ENCODE measurements at regions of chr2 and their contacts with region 1.

Region 1: GRCh38 chr2:101831351-101831865 is 133.9 kb downstream of the MAP4K4 start:
- DNase-seq: peak; percentile 60 to 95 (median 80)

Region 2: DNA sequence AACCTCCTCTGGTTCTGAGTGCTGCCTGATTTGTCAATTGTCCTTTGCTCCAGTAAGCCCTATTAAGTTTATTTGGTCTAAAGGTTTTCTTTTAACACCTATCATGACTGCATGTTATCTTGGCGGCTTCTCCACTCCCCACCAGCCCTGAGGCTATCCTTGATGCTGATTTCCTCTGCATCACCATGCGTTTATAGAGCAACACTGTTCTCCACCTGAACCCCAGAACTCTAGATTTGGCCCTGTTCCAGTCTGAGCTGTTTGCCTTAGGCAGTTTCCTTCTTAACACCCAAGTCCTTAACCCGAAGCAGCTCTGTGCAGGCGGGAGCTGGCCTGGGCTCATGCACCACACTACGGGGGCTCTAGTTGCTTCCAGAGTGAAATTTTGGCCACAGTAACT is 1109.7 kb before region 1 on chr2:
- intact Hi-C with region 1: no loop called
- DNase-seq: no peak

Region 3: GRCh38 chr2:101341901-101342624 is 489.3 kb before region 1 on chr2:
- intact Hi-C with region 1: loop called (anchors 10 kb)
- DNase-seq: peak; percentile 61 to 96 (median 84)

Region 4: DNA sequence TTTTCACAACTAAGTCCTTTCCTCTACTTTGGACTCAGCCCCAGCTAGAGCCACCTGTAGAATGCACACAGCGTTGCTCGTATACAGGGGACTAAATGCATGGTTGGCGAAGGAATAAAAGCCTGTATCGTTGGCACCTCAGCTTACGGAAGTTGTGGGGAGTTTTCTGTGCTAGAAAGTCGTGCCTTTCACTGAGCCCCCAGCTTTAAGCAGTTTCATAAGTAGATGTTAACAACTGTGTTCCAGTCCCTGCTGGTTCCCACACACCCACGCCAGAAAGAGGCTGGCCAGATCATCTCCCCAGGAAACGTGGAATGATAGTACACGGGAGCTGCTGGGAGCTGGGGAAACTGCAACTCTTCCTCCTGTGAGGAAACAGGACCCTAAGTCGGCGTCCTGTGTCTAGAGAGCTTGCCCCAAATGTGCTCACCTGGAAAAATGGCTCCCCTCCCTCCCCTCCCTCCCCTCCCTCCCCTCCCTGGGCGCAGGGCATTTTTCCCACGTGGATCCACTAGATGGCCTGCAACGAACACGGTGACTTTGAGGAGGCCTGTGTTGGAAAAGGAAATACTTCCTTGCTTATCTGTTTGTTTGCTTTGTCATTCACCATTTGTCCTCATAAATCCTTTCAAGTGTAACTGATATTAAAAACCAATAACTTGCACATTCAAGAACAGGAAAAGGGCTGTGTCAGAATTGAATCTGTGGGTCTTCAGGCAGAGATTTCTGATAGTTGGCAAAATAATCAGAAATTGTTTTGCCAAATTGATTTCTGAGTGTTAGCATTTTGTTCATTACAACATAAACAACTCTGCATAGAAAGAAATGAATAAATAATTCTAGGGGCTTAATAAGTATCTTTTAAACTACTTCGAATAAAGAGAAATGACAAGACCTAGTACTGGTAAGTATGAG is 312.6 kb before region 1 on chr2:
- intact Hi-C with region 1: loop called (anchors 5 kb)
- DNase-seq: peak; percentile 28 to 92 (median 67)

Region 5: DNA sequence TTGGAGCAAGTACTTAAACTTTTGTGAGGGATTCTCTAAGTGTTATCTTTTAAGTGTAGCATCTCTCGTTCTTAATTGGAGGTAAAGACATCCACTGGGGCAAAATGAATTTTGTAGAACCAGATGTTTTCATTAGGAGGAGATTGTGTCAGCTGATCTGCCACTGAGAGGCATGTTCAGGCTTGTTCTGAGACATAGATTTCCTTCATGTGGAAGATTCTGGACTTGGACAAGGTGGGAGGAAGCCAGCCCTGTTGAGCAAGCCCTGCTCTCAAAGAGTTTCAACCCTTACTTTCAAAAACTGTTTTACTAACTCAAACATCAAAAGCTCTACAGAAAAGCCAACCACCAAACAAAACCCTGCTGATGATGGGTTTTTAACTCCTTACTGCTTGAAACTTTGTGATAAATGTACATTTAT is 127.4 kb before region 1 on chr2:
- intact Hi-C with region 1: loop called (anchors 5 kb)
- DNase-seq: no peak

Region 6: GRCh38 chr2:101793277-101793969 is 38.0 kb before region 1 on chr2:
- intact Hi-C with region 1: loop called (anchors 5 kb)
- DNase-seq: peak in 9 of 10 donors; percentile 47 to 93 (median 63)

Measured in posterior cingulate gyrus (tissue), 11 donors.